GM10248 (cell line): ENCODE measurements at regions of chr11 and their contacts with region 1.

Region 1: DNA sequence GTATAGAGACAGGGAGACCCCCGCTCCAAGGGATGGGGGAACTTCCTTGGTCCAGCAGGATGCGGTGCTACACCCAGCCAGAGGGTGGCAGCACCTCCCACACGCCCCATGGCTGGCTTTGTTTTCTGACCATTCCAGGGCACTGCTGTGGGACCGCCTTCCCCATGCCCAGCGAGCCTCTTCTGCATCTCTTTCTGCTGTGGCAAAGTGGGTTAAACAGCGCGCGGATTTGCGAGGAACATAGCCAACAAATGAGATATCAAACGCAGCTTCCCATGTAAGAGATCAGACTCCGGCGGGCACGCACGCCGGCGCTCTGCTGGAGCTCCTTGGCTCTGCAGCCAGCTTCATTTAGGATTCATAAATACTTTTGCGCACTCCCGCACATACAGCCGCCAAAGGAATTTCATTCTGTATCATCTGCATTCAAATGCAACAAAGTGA is 485.8 kb upstream of the CADM1 start:
- DNase-seq: peak; percentile 69
- CTCF ChIP-seq: peak; percentile 67

Region 2: GRCh38 chr11:115974703-115975102 is 15.3 kb before region 1 on chr11:
- CTCF ChIA-PET with region 1: interaction called, 10 read pairs
- POLR2A ChIA-PET with region 1: no interaction called
- DNase-seq: no peak
- CTCF ChIP-seq: no peak

Region 3: DNA sequence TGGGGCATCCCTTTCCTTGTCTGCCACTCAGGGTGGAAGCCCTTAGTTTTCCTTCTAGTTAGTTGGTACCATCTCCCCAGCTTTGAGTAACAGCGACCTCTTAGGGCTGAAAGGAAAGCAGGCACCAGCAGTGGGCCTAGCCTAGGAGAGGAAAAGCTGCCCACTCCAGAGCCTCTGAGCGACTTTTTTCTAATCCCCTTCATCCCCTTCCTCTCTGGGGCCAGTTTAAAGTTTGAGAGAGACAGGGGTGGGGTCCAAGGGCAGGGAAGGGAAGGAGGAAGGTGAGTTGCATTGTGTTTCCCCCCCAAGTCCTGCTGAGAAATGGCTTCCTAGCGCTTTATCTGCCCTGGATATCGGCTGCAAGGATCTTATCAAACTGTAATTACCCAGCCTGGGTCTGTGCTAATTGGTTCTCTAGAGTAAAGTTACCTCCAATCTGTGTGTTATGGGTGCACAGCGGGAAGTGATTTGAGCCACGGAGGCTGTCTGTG is 88.1 kb after region 1 on chr11:
- CTCF ChIA-PET with region 1: interaction called, 20 read pairs
- POLR2A ChIA-PET with region 1: no interaction called
- DNase-seq: peak; percentile 36
- CTCF ChIP-seq: peak; percentile 47

Region 4: DNA sequence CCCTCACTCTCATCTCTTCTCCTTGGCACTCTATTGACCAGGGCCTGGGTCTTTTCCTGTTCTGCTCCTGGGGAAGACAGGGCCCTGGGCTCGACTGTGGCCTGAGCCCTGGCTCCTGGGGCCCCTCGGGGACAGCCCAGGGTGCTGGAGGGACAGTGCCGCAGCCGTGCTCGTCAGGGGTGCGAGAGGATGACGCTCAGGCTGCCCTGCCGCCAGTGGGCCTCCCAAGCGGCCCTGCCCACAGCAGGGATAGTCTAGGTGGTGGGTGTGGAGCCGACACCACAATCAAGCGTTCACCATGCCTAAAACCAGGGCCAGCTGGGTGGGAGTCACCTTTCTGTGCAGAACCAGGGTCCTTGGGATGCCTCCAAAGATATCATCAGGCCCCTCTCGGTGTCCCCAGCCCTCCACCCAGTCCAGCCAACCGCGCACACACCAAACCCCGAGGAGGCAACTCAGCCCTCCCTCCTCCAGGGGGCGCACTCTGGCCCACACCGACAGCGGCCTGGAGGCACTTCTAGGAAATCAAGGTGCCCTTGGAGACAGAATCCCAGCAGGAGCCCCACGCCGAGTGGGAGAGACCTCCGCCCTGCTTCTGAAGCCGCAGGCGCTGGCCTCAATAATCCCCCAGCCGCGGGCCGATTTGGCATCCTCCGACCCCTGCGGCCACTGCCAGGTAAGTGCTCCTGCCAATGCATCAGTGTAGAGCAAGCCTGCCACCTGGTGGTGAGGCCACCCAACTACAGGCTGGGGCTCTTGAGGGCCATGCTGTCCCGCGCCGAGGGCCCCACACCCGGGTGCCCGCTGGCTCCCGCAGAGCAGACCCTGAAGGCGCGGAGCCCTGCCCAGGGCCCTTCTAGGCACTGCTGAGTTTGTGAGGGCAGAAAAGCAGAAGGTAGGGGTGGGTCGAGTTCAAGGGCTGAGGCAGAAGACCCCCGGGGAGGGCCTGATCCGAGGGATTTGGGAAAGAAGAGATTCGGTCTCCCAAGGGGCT is 286.3 kb after region 1 on chr11:
- CTCF ChIA-PET with region 1: no interaction called
- POLR2A ChIA-PET with region 1: no interaction called
- DNase-seq: peak; percentile 83
- CTCF ChIP-seq: peak; percentile 90